Activated CD8-positive, alpha-beta memory T cell treated with anti-CD3 and anti-CD28 coated beads, Interleukin-2, amount 10 ng/mL, durations not matched to agents 7 days and 5 days (primary cell): ENCODE measurements at regions of chr2 and their contacts with region 1.

Region 1: GRCh38 chr2:95076784-95077529 is 44.7 kb downstream of the MRPS5 start:
- DNase-seq: peak; percentile 93
- ATAC-seq: peak; percentile 80
- H3K4me3 Mint-ChIP-seq: peak overlapping the region; percentile 67
- H3K27ac Mint-ChIP-seq: peak overlapping the region; percentile 90
- H3K4me1 Mint-ChIP-seq: peaks cover 75% of the 10 kb centered on the region
- H3K27me3 Mint-ChIP-seq: peaks cover 4% of the 10 kb centered on the region

Region 2: DNA sequence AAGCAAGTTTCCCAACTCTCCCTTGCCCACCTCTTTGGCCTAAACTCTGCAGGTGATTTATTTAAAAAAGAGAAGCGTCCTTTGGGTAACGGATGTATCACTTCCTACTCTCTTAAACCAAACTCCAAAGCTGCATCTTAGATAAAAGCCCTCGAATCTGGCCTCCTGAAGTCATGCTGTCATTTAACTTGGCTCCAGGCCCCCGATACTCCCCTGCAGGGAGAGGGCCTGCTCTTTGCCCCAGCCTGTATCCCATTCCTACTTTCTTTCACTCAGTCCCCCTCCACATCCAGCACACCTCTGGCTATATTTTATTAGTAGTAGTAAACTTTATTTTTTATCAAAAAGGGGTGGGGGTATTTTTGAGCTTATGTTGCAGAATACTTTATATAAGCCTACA is 186.7 kb before region 1 on chr2:
- CTCF ChIA-PET with region 1: no interaction called
- DNase-seq: no peak
- ATAC-seq: no peak
- H3K4me3 Mint-ChIP-seq: no peak overlapping the region
- H3K27ac Mint-ChIP-seq: no peak overlapping the region
- H3K4me1 Mint-ChIP-seq: no peaks in the 10 kb centered on the region
- H3K27me3 Mint-ChIP-seq: peaks cover 10% of the 10 kb centered on the region

Region 3: GRCh38 chr2:94986392-94986963 is 90.5 kb before region 1 on chr2:
- CTCF ChIA-PET with region 1: interaction called, 10 read pairs
- DNase-seq: peak; percentile 59
- ATAC-seq: no peak
- H3K4me3 Mint-ChIP-seq: no peak overlapping the region
- H3K27ac Mint-ChIP-seq: no peak overlapping the region
- H3K4me1 Mint-ChIP-seq: peaks cover 3% of the 10 kb centered on the region
- H3K27me3 Mint-ChIP-seq: peaks cover 20% of the 10 kb centered on the region

Region 4: DNA sequence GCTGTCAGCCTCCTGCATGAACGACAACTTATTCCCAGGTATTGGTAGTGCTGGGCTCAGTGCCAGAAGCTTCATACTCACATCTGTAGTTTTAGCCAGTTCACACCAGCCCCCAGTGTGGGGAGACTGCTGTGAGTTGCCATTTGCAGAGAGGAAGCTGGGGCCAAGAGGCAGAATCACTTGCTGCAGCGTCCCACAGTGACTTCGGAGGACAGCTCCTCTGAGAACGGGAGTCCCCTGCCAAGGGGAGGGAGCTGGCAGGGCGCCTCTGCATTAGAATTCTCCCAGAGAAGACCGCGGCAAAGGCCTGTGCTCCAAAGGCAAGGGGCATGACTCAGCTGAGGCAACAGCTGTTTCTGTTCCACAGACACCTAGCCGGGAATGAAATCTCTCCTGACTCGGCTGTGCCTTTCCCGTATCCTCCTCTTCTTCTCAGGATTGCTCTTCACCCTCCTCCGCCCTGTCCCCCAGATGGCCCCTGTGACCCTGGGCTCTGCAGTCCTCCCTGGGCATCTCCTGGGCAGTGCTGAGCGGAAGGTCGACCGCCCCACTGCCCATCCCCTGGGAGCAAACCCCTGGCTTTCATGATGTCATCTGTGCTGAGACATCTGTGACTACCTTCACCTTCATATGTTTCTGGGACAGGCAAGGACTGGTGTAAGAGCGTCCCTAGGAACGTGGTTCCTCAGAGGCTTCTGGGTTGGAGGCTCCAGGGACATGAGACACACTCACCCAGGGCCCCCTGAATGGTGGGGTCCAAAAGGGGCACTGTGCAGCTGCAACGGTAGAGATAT is 33.5 kb before region 1 on chr2:
- CTCF ChIA-PET with region 1: interaction called, 12 read pairs
- DNase-seq: no peak
- ATAC-seq: peak; percentile 37
- H3K4me3 Mint-ChIP-seq: no peak overlapping the region
- H3K27ac Mint-ChIP-seq: no peak overlapping the region
- H3K4me1 Mint-ChIP-seq: peaks cover 49% of the 10 kb centered on the region
- H3K27me3 Mint-ChIP-seq: no peaks in the 10 kb centered on the region

Region 5: GRCh38 chr2:95062242-95063085 is 14.5 kb before region 1 on chr2:
- CTCF ChIA-PET with region 1: interaction called, 149 read pairs
- DNase-seq: peak; percentile 35
- ATAC-seq: peak; percentile 34
- H3K4me3 Mint-ChIP-seq: no peak overlapping the region
- H3K27ac Mint-ChIP-seq: peak overlapping the region; percentile 80
- H3K4me1 Mint-ChIP-seq: peaks cover 29% of the 10 kb centered on the region
- H3K27me3 Mint-ChIP-seq: peaks cover 2% of the 10 kb centered on the region

Region 6: DNA sequence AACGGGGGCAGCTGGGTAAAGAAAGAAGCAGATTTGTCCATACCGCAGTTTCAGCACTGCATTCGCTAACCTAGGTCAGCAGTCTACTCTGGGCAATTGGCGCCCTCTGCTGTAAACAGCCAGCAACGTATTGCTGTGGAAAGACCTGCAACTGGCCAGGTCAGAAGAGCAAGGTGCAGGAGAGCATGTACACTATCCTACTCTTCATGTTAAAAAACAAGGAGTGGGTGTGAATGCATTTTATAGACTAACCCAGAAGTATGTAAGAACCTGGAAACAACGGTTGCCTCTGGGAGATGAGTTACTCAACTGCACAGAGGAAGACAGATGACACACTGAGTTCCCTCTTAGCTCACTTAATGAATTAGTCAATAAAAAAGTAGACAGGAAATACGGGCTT is 38.5 kb after region 1 on chr2:
- CTCF ChIA-PET with region 1: interaction called, 53 read pairs
- DNase-seq: peak; percentile 85
- ATAC-seq: peak; percentile 99
- H3K4me3 Mint-ChIP-seq: no peak overlapping the region
- H3K27ac Mint-ChIP-seq: peak overlapping the region; percentile 19
- H3K4me1 Mint-ChIP-seq: peaks cover 43% of the 10 kb centered on the region
- H3K27me3 Mint-ChIP-seq: no peaks in the 10 kb centered on the region